Activated CD4-positive, alpha-beta memory T cell treated with anti-CD3 and anti-CD28 coated beads for 36 hours (primary cell): ENCODE measurements at regions of chrX and their contacts with region 1.

Region 1: GRCh38 chrX:80578517-80579105 is 158.4 kb downstream of the TENT5D start:
- DNase-seq: no peak
- H3K4me3 Mint-ChIP-seq: no peak overlapping the region
- H3K27ac Mint-ChIP-seq: no peak overlapping the region
- H3K4me1 Mint-ChIP-seq: no peaks in the 10 kb centered on the region
- H3K27me3 Mint-ChIP-seq: no peaks in the 10 kb centered on the region

Region 2: DNA sequence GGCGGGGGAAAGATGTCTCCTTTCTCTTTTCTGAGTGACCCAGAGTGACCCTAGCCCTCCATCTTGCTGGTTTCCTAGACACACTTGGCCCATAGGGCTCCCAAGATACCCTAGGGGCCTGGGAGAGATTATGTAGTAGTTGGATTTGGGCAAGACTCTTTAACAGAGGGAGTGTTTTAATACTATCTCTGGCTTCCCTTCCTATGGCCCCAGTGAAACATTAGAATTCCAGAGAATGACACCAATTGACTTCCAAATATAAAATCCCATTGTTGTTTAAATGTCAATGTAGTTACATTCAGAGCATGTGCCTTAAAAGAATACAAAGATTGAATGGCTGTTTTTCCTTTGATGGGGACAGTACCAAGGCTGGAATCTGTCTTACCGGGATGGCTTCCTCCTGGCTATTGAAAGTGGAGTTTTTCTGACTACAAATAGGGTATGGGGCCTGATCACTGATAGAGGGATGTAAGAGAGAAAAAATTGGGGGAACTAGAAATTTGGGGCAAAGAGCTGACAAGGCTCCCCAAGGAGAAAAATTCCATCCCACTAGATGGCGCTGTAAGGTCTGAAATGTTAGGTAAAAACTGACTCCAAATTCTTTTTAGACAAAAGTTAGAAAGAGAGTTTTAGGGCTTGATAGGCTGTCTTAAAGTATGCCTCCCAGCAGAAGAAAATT is 147.6 kb before region 1 on chrX:
- CTCF ChIA-PET with region 1: no interaction called
- POLR2A ChIA-PET with region 1: no interaction called
- intact Hi-C with region 1: loop called (anchors 2 kb)
- DNase-seq: peak; percentile 8
- H3K4me3 Mint-ChIP-seq: no peak overlapping the region
- H3K27ac Mint-ChIP-seq: no peak overlapping the region
- H3K4me1 Mint-ChIP-seq: no peaks in the 10 kb centered on the region
- H3K27me3 Mint-ChIP-seq: no peaks in the 10 kb centered on the region

Region 3: DNA sequence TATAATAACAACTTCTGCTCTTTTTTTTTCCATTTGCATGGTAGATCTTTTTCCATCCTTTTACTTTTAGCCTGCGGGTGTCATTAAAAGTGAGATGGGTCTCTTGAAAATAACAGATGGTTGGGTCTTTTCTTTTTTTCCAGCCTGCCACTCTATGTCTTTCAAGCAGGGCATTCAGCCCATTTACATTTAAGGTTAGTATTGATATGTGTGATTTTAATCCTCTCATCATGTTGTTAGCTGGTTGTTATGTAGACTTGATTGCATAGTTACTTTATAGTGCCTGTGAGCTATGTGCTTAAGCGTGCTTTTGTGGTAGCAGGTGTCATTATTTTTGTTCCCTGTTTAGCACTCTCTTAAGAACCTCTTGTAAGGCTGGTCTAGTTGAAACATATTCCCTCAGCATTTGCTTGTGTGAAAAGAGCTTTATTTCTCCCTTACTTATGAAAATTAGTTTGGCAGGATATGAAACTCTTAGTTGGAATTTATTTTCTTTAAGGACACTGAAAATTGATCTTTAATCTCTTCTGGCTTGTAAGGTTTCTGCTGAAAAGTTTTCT is 949.4 kb after region 1 on chrX:
- CTCF ChIA-PET with region 1: no interaction called
- POLR2A ChIA-PET with region 1: no interaction called
- intact Hi-C with region 1: no loop called
- DNase-seq: no peak
- H3K4me3 Mint-ChIP-seq: no peak overlapping the region
- H3K27ac Mint-ChIP-seq: no peak overlapping the region
- H3K4me1 Mint-ChIP-seq: no peaks in the 10 kb centered on the region
- H3K27me3 Mint-ChIP-seq: no peaks in the 10 kb centered on the region